HepG2 (cell line): ENCODE measurements at regions of chr14 and their contacts with region 1.

Region 1: GRCh38 chr14:39102969-39103957 is at the start of gene SEC23A:
- DNase-seq: peak; percentile 99
- ATAC-seq: peak; percentile 94
- H3K4me3 ChIP-seq: peak within 1 kb of the TSS; percentile 81 to 91 (median 90)
- H3K27ac ChIP-seq: peak within 1 kb of the TSS; percentile 94
- H3K4me1 ChIP-seq: peaks cover 62% of the 10 kb centered on the region
- H3K27me3 ChIP-seq: no peaks in the 10 kb centered on the region; a peak in 1 of 5 replicates
- CTCF ChIP-seq: peak; percentile 69
- EP300 ChIP-seq: peak; percentile 72 to 80; a peak in 3 of 4 replicates
- POLR2A ChIP-seq: peak; percentile 90 to 92
- RAD21 ChIP-seq: peak; percentile 78
- total RNA-seq, gene SEC23A: 887 and 1,365 TPM in 2 replicates

Region 2: DNA sequence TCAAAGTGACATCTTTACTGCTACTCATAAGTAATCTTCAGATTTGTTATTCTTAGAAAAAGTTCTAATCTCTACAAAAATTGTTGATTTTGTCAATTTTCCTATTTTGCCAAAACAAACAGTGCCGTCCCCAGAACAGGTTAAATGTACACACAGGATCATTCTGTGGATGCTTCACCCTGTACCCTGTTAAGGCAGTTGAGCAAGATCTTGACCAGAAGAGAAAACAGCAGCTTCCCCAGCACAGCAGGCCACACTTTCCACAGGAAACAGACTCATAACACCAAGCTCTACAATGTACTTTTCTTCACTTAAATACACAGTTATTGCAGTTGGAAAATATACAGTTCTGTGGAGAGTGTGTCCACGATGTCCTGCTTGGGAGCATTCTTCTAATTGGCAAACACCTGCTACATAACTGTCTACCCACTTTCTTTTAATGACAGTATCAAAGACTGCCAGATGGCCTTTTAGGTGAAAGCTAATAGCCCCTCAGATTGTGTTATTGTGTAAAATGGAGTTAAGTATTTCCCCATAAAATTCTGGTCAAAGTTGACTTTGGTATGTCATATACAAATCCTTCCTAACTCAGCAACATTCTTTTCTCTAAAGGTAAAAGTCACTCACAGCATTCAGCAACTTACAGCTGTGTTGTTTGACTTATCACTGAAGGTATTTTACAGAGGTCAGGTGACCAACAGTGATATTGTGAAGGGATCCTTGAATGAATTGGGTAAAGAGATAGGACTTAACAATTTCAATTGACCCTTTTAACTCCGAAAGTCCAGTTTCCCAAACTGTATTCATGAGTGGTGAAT is 77.2 kb before region 1 on chr14:
- CTCF ChIA-PET with region 1: no interaction called
- POLR2A ChIA-PET with region 1: interaction called, 91 read pairs
- in situ Hi-C with region 1: no loop called
- intact Hi-C with region 1: no loop called
- DNase-seq: peak; percentile 87
- ATAC-seq: peak; percentile 74
- H3K4me3 ChIP-seq: peak overlapping the region in 1 of 3 experiments; percentile 8; a peak in 1 of 6 replicates
- H3K27ac ChIP-seq: peak overlapping the region; percentile 74
- H3K4me1 ChIP-seq: peaks cover 48% of the 10 kb centered on the region
- H3K27me3 ChIP-seq: no peaks in the 10 kb centered on the region
- CTCF ChIP-seq: 0 out of 2 replicates have a peak, but pooled peaks have one; percentile 8
- EP300 ChIP-seq: peak in 1 of 2 experiments; percentile 86; a peak in 2 of 4 replicates
- POLR2A ChIP-seq: no peak
- RAD21 ChIP-seq: peak; percentile 32; the same call in 1 of the 2 replicates

Region 3: GRCh38 chr14:39071096-39071495 is 32.2 kb before region 1 on chr14:
- CTCF ChIA-PET with region 1: no interaction called
- POLR2A ChIA-PET with region 1: interaction called, 13 read pairs
- in situ Hi-C with region 1: no loop called
- intact Hi-C with region 1: no loop called
- DNase-seq: no peak
- ATAC-seq: peak; percentile 4; the same call in 1 of the 3 replicates
- H3K4me3 ChIP-seq: no peak overlapping the region
- H3K27ac ChIP-seq: no peak overlapping the region
- H3K4me1 ChIP-seq: peaks cover 23% of the 10 kb centered on the region
- H3K27me3 ChIP-seq: no peaks in the 10 kb centered on the region
- CTCF ChIP-seq: no peak
- EP300 ChIP-seq: no peak
- POLR2A ChIP-seq: no peak
- RAD21 ChIP-seq: no peak

Region 4: GRCh38 chr14:39114073-39114838 is 11.0 kb after region 1 on chr14 and contains the start of gene GEMIN2:
- CTCF ChIA-PET with region 1: interaction called, 3 read pairs
- POLR2A ChIA-PET with region 1: interaction called, 242 read pairs
- in situ Hi-C with region 1: no loop called
- intact Hi-C with region 1: loop called (anchors 1 kb)
- DNase-seq: peak; percentile 97
- ATAC-seq: peak; percentile 99
- H3K4me3 ChIP-seq: peak within 1 kb of the TSS; percentile 71 to 90 (median 76)
- H3K27ac ChIP-seq: peak within 1 kb of the TSS; percentile 40
- H3K4me1 ChIP-seq: peaks cover 33% of the 10 kb centered on the region
- H3K27me3 ChIP-seq: no peaks in the 10 kb centered on the region; a peak in 1 of 5 replicates
- CTCF ChIP-seq: peak; percentile 26
- EP300 ChIP-seq: peak in 1 of 2 experiments; percentile 13; a peak in 2 of 4 replicates
- POLR2A ChIP-seq: peak; percentile 89 to 99; a peak in 3 of 4 replicates
- RAD21 ChIP-seq: peak; percentile 29; the same call in 1 of the 2 replicates
- total RNA-seq, gene GEMIN2: 110 and 160 TPM in 2 replicates

Region 5: DNA sequence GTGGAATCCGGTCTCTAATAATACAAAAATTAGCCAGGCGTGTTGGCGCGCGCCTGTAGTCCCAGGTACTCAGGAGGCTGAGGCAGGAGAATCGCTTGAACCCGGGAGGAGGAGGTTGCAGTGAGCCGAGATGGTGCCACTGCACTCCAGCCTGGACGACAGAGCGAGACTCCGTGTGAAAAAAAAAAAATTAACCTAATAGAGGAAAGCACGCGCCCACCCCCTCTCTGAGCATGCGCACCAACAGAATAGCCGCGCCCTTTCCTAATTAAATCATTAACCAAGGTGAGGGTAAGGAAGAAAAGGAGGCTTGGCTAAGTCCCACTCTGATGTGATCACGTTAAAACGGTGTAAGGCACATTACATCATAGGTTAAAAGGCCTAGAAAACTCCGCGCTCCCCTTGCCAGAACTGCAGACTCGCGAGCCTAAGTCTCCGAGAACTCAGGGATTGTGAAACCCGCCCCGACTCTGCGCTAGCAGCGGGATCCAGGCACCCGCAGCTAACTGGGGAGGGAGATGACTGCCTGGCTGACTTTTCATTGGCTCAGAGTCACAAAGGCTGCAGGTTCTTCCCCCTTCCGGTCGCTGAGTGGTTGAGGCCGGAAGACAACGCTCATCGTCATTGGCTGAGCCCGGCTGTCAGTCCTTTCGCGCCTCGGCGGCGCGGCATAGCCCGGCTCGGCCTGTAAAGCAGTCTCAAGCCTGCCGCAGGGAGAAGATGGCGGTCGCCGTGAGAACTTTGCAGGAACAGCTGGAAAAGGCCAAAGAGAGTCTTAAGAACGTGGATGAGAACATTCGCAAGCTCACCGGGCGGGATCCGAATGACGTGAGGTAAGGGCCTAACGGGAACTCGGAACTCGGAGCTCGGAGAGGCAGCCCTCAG is 71.5 kb after region 1 on chr14 and contains the start of gene PNN:
- CTCF ChIA-PET with region 1: no interaction called
- POLR2A ChIA-PET with region 1: interaction called, 285 read pairs
- in situ Hi-C with region 1: no loop called
- intact Hi-C with region 1: loop called (anchors 1 kb)
- DNase-seq: peak; percentile 100
- ATAC-seq: peak; percentile 92
- H3K4me3 ChIP-seq: peak within 1 kb of the TSS; percentile 80 to 96 (median 80)
- H3K27ac ChIP-seq: peak within 1 kb of the TSS; percentile 88
- H3K4me1 ChIP-seq: peaks cover 52% of the 10 kb centered on the region
- H3K27me3 ChIP-seq: peaks cover 0 to 2% of the 10 kb centered on the region in 2 experiments; a peak in 1 of 5 replicates
- CTCF ChIP-seq: 0 out of 2 replicates have a peak, but pooled peaks have one; percentile 2
- EP300 ChIP-seq: peak; percentile 69 to 97
- POLR2A ChIP-seq: peak in 1 of 2 experiments; percentile 98; a peak in 2 of 4 replicates
- RAD21 ChIP-seq: peak; percentile 66
- total RNA-seq, gene PNN: 110 and 214 TPM in 2 replicates

Region 6: GRCh38 chr14:39266871-39267591 is 163.8 kb after region 1 on chr14:
- CTCF ChIA-PET with region 1: no interaction called
- POLR2A ChIA-PET with region 1: interaction called, 77 read pairs
- in situ Hi-C with region 1: no loop called
- intact Hi-C with region 1: loop called (anchors 1 kb)
- DNase-seq: peak; percentile 86
- ATAC-seq: peak; percentile 88
- H3K4me3 ChIP-seq: peak overlapping the region; percentile 72 to 91 (median 74)
- H3K27ac ChIP-seq: peak overlapping the region; percentile 93
- H3K4me1 ChIP-seq: peaks cover 56% of the 10 kb centered on the region
- H3K27me3 ChIP-seq: no peaks in the 10 kb centered on the region; a peak in 1 of 5 replicates
- CTCF ChIP-seq: no peak
- EP300 ChIP-seq: no peak
- POLR2A ChIP-seq: peak in 1 of 2 experiments; percentile 88; a peak in 2 of 4 replicates
- RAD21 ChIP-seq: no peak; the same call in none of the 2 replicates

Region 7: GRCh38 chr14:39432179-39432618 is 328.9 kb after region 1 on chr14 and contains the start of gene FBXO33:
- CTCF ChIA-PET with region 1: no interaction called
- POLR2A ChIA-PET with region 1: interaction called, 68 read pairs
- in situ Hi-C with region 1: loop called (anchors 5 kb)
- intact Hi-C with region 1: no loop called
- DNase-seq: peak; percentile 98
- ATAC-seq: peak; percentile 87
- H3K4me3 ChIP-seq: peak within 1 kb of the TSS; percentile 88 to 98 (median 94)
- H3K27ac ChIP-seq: peak within 1 kb of the TSS; percentile 98
- H3K4me1 ChIP-seq: peaks cover 37% of the 10 kb centered on the region
- H3K27me3 ChIP-seq: no peaks in the 10 kb centered on the region; a peak in 1 of 5 replicates
- CTCF ChIP-seq: no peak
- EP300 ChIP-seq: peak in 1 of 2 experiments; percentile 77; a peak in 2 of 4 replicates
- POLR2A ChIP-seq: no peak
- RAD21 ChIP-seq: peak; percentile 27; the same call in 1 of the 2 replicates
- total RNA-seq, gene FBXO33: 15.5 and 23.3 TPM in 2 replicates